GM12878 (cell line): ENCODE measurements at regions of chr18 and their contacts with region 1.

Region 1: DNA sequence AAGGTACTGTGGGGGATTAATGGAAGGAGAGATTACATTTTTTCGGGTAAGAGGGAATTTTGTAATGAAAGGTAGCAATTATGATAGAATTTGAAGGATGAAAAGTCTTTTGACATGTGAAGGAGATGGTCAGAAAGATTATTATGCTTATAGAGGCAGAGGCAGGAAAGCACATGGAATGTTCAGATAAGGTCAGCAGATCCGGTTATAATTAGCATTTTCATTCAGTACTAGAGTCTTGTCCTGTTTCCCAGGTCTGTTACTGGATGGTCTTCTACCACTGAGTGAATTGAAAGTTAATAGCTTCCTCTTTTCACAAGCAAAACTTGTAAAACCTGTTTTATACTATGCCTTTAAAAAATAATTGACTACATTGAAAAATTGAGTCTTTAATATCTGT is 116.9 kb downstream of the PHLPP1 start:
- DNase-seq: no peak
- ATAC-seq: peak; percentile 74
- H3K4me3 ChIP-seq: no peak overlapping the region
- H3K27ac ChIP-seq: peak overlapping the region; percentile 50
- H3K4me1 ChIP-seq: peaks cover 15% of the 10 kb centered on the region
- H3K27me3 ChIP-seq: no peaks in the 10 kb centered on the region
- CTCF ChIP-seq: no peak
- EP300 ChIP-seq: no peak
- POLR2A ChIP-seq: no peak
- RAD21 ChIP-seq: no peak

Region 2: GRCh38 chr18:62844850-62845643 is 12.8 kb after region 1 on chr18:
- CTCF ChIA-PET with region 1: interaction called, 3 read pairs
- POLR2A ChIA-PET with region 1: interaction called, 10 read pairs
- RAD21 ChIA-PET with region 1: no interaction called
- SMC1A ChIA-PET with region 1: interaction called, 3 read pairs
- in situ Hi-C with region 1: no loop called
- intact Hi-C with region 1: loop called (anchors 2 kb)
- DNase-seq: no peak
- ATAC-seq: peak; percentile 77
- H3K4me3 ChIP-seq: peak overlapping the region; percentile 48; the same call in 1 of the 2 replicates
- H3K27ac ChIP-seq: peak overlapping the region; percentile 59
- H3K4me1 ChIP-seq: peaks cover 17% of the 10 kb centered on the region
- H3K27me3 ChIP-seq: no peaks in the 10 kb centered on the region
- CTCF ChIP-seq: no peak
- EP300 ChIP-seq: no peak
- POLR2A ChIP-seq: no peak
- RAD21 ChIP-seq: no peak

Region 3: DNA sequence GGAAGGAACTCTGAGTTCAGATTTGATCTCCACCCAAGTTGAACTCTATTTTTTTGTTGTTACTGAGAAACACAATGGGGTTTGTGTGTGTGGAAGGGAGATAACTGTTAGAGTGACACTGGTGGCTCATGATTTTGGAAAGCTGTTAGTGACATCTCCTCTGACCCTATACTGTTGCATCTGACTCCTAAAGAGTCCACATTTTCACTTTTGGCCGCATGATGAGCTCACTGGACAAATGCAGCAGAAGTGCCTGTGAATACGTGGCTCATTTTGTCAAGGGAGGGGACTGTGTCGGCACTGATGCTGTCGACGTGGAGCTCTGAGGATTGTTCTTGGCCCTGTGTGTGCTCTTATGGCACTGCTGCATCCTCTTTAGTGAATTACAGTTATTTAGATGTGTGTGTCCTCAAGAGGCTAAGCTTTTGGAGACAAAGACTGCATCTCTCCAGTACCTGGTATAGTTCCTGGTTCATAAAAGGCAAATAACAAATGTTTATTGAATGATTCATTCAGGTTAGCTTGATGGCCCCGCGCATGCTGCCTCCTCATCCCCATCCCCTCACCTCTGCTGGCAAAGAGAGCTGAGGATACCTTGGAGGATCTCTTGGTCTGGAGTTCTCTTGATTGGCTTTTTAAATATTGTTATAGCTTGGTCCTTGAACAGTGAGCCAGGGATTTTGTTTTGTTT is 18.5 kb after region 1 on chr18:
- CTCF ChIA-PET with region 1: no interaction called
- POLR2A ChIA-PET with region 1: interaction called, 10 read pairs
- RAD21 ChIA-PET with region 1: no interaction called
- SMC1A ChIA-PET with region 1: interaction called, 5 read pairs
- in situ Hi-C with region 1: no loop called
- intact Hi-C with region 1: loop called (anchors 2 kb)
- DNase-seq: no peak
- ATAC-seq: no peak
- H3K4me3 ChIP-seq: no peak overlapping the region
- H3K27ac ChIP-seq: no peak overlapping the region
- H3K4me1 ChIP-seq: peaks cover under 1% of the 10 kb centered on the region; the same call in 1 of the 2 replicates
- H3K27me3 ChIP-seq: no peaks in the 10 kb centered on the region
- CTCF ChIP-seq: no peak
- EP300 ChIP-seq: no peak
- POLR2A ChIP-seq: no peak
- RAD21 ChIP-seq: no peak